ENCODE measurements at regions of chr15 and their contacts with region 1.

Region 1: DNA sequence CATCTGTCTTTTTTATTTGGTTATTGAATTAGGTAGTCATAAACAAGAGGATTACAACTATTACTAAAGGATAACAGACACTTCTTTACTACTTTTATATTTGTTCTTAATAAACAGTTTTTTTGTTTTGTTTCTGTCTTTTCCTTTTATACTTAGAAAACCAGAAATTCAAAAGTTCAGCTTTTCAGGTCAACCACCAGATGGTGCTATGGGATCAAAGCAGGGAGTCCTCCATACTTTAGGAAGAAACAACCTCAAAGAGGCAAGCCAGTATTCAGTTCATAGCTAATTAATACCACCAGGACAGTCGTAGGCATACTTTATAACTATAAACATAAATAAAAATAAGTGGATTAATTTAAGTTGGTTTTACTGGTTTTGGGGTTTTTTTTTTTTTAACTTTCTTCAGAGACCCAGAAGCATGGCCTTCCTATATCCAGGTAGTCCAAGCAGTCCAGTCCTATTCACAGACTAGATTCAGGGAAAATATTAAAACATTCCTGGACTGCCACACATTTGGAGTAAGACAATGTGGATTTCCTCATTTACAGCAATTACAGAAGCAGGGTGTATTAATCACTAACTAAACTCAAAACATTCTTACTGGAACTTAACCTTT is 16.0 kb upstream of the EID1 start:
- DNase-seq: peak in 7 of 9 donors; percentile 45 to 75 (median 66)
- ATAC-seq: peak; percentile 80
- H3K4me3 ChIP-seq: no peak overlapping the region
- H3K4me3 Mint-ChIP-seq: no peak overlapping the region
- H3K27ac ChIP-seq: no peak overlapping the region
- H3K27ac Mint-ChIP-seq: no peak overlapping the region
- H3K4me1 ChIP-seq: no peaks in the 10 kb centered on the region
- H3K4me1 Mint-ChIP-seq: peaks cover 0 to 13% (median 3%) of the 10 kb centered on the region in 7 donors
- H3K27me3 ChIP-seq: no peaks in the 10 kb centered on the region
- H3K27me3 Mint-ChIP-seq: peaks cover 2 to 21% (median 7%) of the 10 kb centered on the region in 5 donors

Region 2: GRCh38 chr15:48963524-48964113 is 101.7 kb after region 1 on chr15 and contains the start of gene SHC4:
- CTCF ChIA-PET with region 1: interaction called, 3 read pairs
- POLR2A ChIA-PET with region 1: no interaction called
- intact Hi-C with region 1: loop called in 1 of 2 experiments (anchors 1 kb)
- DNase-seq: peak in 4 of 9 donors; percentile 21 to 37 (median 32)
- ATAC-seq: peak; percentile 64
- H3K4me3 ChIP-seq: peak within 1 kb of the TSS; percentile 58
- H3K4me3 Mint-ChIP-seq: peak within 1 kb of the TSS; percentile 68 to 91 (median 84)
- H3K27ac ChIP-seq: no peak within 1 kb of the TSS
- H3K27ac Mint-ChIP-seq: peak within 1 kb of the TSS in 3 of 9 donors; percentile 41 to 68 (median 56)
- H3K4me1 ChIP-seq: peaks cover 17 to 23% of the 10 kb centered on the region in 2 donors
- H3K4me1 Mint-ChIP-seq: peaks cover 15 to 41% (median 21%) of the 10 kb centered on the region in 7 donors
- H3K27me3 ChIP-seq: peaks cover 0 to 18% of the 10 kb centered on the region in 2 donors
- H3K27me3 Mint-ChIP-seq: peaks cover 13 to 65% (median 44%) of the 10 kb centered on the region in 5 donors
- total RNA-seq, gene SHC4: 1.2 TPM in 1 of 5 experiments, not detected in the others

Region 3: DNA sequence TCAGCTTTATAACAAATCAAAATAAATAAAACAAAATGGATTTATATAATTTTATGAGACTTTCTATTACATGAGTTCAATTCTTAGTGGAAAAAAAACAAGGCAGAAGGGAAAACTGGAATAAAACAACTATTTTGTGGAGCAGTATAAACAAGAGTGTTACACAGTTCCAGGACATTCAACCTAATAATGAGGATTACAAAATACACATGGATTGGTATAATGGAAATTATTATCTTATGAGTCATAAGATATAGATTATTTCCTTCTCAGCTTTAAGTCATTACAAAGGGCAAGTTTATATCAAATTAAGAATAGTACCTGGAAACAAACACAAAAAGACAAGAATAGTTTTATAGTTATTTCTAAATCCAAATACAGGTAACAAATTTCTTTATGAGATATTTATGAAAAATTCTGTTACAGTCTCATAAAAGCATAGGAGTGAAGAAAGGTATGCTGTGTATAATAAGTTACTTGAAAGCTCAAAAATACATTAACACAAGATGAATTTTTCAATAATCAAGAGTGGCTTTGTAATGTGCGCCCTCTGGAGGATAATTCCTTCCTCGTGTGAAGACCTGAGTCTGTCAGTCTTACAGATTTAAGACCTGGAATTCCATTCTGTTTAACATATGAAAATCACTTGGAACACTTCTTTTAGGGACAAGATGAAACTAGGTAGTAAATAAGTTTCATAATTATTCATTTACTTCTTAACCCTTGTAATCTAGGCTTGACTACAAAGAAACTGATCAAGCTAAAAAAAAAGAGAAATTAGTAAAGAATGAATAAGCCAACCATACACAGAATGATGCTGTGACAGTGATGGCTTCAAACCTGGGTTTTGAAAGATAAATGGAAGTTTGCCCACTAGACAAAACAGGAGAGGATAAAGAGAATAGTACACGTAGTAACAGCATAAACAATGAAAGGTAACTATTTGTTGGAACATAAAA is 284.0 kb after region 1 on chr15:
- CTCF ChIA-PET with region 1: interaction called, 32 read pairs
- POLR2A ChIA-PET with region 1: interaction called, 8 read pairs
- intact Hi-C with region 1: loop called (anchors 1 kb)
- DNase-seq: peak in 6 of 9 donors; percentile 18 to 49 (median 28)
- ATAC-seq: peak; percentile 76
- H3K4me3 ChIP-seq: no peak overlapping the region
- H3K4me3 Mint-ChIP-seq: peak overlapping the region in 1 of 10 donors; percentile 44
- H3K27ac ChIP-seq: no peak overlapping the region
- H3K27ac Mint-ChIP-seq: peak overlapping the region in 4 of 9 donors; percentile 1 to 63 (median 42)
- H3K4me1 ChIP-seq: peaks cover 8 to 14% of the 10 kb centered on the region in 2 donors
- H3K4me1 Mint-ChIP-seq: peaks cover 22 to 74% (median 50%) of the 10 kb centered on the region in 7 donors
- H3K27me3 ChIP-seq: no peaks in the 10 kb centered on the region
- H3K27me3 Mint-ChIP-seq: no peaks in the 10 kb centered on the region

Region 4: DNA sequence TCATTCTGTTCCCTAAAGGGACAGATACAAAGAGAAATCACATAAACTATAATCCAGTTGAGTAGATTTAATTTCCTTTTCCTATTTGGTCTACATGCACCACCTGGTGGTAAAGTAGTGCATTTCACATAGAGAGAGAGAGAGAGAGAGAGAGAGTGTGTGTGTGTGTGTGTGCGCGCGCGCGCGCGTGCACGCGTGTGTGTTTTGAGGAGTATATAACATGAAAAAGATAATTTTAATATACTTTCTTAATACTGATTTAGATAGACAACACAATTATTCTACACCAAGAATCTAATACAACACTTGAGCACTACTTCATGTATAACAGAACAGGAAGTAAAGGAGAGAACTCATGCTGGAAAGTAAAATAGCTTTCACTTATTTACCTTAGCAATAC is 560.1 kb after region 1 on chr15:
- CTCF ChIA-PET with region 1: interaction called, 34 read pairs
- POLR2A ChIA-PET with region 1: no interaction called
- intact Hi-C with region 1: loop called (anchors 1 kb)
- DNase-seq: peak in 8 of 9 donors; percentile 5 to 60 (median 52)
- ATAC-seq: peak; percentile 75
- H3K4me3 ChIP-seq: no peak overlapping the region
- H3K4me3 Mint-ChIP-seq: peak overlapping the region in 8 of 10 donors; percentile 23 to 72 (median 49)
- H3K27ac ChIP-seq: no peak overlapping the region
- H3K27ac Mint-ChIP-seq: peak overlapping the region in 7 of 9 donors; percentile 10 to 84 (median 74)
- H3K4me1 ChIP-seq: no peaks in the 10 kb centered on the region
- H3K4me1 Mint-ChIP-seq: peaks cover 3 to 6% (median 4%) of the 10 kb centered on the region in 7 donors
- H3K27me3 ChIP-seq: no peaks in the 10 kb centered on the region
- H3K27me3 Mint-ChIP-seq: peaks cover 0 to 9% (median 0%) of the 10 kb centered on the region in 5 donors

Region 5: DNA sequence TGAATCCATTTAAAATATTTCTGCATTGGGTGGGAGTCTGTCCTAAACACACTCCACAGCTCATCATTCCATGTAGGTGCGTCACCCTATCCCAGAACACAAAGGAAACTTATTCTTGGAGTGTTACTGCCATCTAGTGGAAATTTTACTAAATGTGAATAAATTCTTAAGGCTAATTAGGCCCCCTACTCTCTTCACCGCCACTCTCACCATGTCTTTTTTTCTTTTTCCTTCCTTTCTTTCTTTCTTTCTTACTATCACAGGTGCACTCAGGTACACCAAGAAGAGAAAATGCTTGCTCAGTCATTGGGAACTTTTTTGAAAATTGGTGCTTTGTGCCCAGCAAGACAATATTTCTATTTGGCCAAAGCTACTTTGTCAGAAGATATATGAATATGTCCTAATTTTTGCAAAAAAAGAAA is 1283.5 kb after region 1 on chr15:
- CTCF ChIA-PET with region 1: interaction called, 13 read pairs
- POLR2A ChIA-PET with region 1: no interaction called
- intact Hi-C with region 1: loop called (anchors 1 kb)
- DNase-seq: peak in 6 of 9 donors; percentile 7 to 47 (median 36)
- ATAC-seq: peak; percentile 60
- H3K4me3 ChIP-seq: no peak overlapping the region
- H3K4me3 Mint-ChIP-seq: no peak overlapping the region
- H3K27ac ChIP-seq: no peak overlapping the region
- H3K27ac Mint-ChIP-seq: peak overlapping the region in 1 of 9 donors; percentile 66
- H3K4me1 ChIP-seq: no peaks in the 10 kb centered on the region
- H3K4me1 Mint-ChIP-seq: peaks cover 0 to 30% (median 0%) of the 10 kb centered on the region in 7 donors
- H3K27me3 ChIP-seq: no peaks in the 10 kb centered on the region
- H3K27me3 Mint-ChIP-seq: peaks cover 0 to 3% (median 0%) of the 10 kb centered on the region in 5 donors

Measured in naive thymus-derived CD4-positive, alpha-beta T cell (primary cell).